ENCODE measurements at regions of chr17 and their contacts with region 1.

Region 1: GRCh38 chr17:54992797-54993639 is 24.5 kb downstream of the STXBP4 start:
- DNase-seq: no peak
- H3K4me3 Mint-ChIP-seq: no peak overlapping the region
- H3K27ac Mint-ChIP-seq: no peak overlapping the region
- H3K4me1 Mint-ChIP-seq: no peaks in the 10 kb centered on the region
- H3K27me3 Mint-ChIP-seq: no peaks in the 10 kb centered on the region

Region 2: GRCh38 chr17:55005520-55005919 is 12.5 kb after region 1 on chr17:
- CTCF ChIA-PET with region 1: interaction called, 30 read pairs
- POLR2A ChIA-PET with region 1: no interaction called
- DNase-seq: no peak
- H3K4me3 Mint-ChIP-seq: no peak overlapping the region
- H3K27ac Mint-ChIP-seq: no peak overlapping the region
- H3K4me1 Mint-ChIP-seq: no peaks in the 10 kb centered on the region
- H3K27me3 Mint-ChIP-seq: no peaks in the 10 kb centered on the region

Region 3: DNA sequence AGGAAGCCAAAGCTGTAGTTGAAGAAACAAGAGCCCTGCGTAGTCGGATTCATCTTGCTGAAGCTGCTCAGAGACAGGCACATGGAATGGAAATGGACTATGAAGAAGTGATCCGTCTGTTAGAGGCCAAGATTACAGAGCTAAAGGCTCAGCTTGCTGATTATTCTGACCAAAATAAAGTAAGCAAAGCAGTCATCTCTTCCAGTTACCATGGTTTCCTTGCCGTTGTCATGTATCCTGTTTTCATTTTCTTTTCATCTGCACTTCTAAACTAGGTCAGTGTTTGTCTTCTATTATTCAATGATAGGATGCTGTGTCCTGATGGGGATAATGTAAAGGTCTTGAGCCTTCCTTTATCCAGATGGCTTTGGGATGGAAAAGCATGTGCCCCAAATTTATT is 79.9 kb after region 1 on chr17:
- CTCF ChIA-PET with region 1: no interaction called
- POLR2A ChIA-PET with region 1: no interaction called
- DNase-seq: no peak
- H3K4me3 Mint-ChIP-seq: no peak overlapping the region
- H3K27ac Mint-ChIP-seq: no peak overlapping the region
- H3K4me1 Mint-ChIP-seq: peaks cover 11% of the 10 kb centered on the region
- H3K27me3 Mint-ChIP-seq: no peaks in the 10 kb centered on the region

Region 4: GRCh38 chr17:55295411-55296170 is 302.6 kb after region 1 on chr17:
- CTCF ChIA-PET with region 1: interaction called, 20 read pairs
- POLR2A ChIA-PET with region 1: no interaction called
- DNase-seq: peak; percentile 59
- H3K4me3 Mint-ChIP-seq: no peak overlapping the region
- H3K27ac Mint-ChIP-seq: no peak overlapping the region
- H3K4me1 Mint-ChIP-seq: no peaks in the 10 kb centered on the region
- H3K27me3 Mint-ChIP-seq: no peaks in the 10 kb centered on the region

Region 5: GRCh38 chr17:55356434-55357328 is 363.7 kb after region 1 on chr17:
- CTCF ChIA-PET with region 1: interaction called, 76 read pairs
- POLR2A ChIA-PET with region 1: no interaction called
- DNase-seq: peak; percentile 78
- H3K4me3 Mint-ChIP-seq: no peak overlapping the region
- H3K27ac Mint-ChIP-seq: no peak overlapping the region
- H3K4me1 Mint-ChIP-seq: peaks cover 2% of the 10 kb centered on the region
- H3K27me3 Mint-ChIP-seq: peaks cover 15% of the 10 kb centered on the region